Thyroid gland (tissue), 4 donors: ENCODE measurements at regions of chr16 and their contacts with region 1.

Region 1: DNA sequence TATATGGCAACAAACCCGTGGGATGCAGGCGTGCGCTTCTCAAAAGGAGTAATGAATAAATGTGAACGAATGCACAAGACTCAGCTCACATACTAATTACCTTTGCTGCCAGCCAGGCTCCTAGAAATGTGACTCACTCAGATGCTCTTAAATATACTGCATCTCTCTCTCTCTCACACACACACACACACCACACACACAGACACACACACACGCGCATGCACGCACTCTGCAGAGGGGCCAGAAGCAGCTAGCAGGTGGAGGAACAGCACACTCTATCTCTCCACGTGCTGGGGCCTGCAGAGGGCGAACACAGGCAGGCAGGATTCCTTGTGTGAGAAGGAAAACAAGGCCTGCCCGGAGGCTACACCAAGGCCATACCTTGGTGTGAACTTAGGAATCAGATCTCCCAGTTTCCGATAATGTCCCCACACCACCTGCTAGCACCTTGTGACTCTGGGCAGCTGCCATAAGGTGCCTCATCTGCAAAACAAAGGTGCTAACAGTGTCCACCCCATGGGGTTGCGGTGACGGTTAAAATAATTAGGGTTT is 5.3 kb downstream of the GPRC5B start:
- DNase-seq: no peak
- H3K4me3 ChIP-seq: no peak overlapping the region
- H3K27ac ChIP-seq: no peak overlapping the region
- H3K4me1 ChIP-seq: peaks cover 0 to 5% of the 10 kb centered on the region in 2 donors
- H3K27me3 ChIP-seq: no peaks in the 10 kb centered on the region
- CTCF ChIP-seq: no peak
- POLR2A ChIP-seq: no peak

Region 2: DNA sequence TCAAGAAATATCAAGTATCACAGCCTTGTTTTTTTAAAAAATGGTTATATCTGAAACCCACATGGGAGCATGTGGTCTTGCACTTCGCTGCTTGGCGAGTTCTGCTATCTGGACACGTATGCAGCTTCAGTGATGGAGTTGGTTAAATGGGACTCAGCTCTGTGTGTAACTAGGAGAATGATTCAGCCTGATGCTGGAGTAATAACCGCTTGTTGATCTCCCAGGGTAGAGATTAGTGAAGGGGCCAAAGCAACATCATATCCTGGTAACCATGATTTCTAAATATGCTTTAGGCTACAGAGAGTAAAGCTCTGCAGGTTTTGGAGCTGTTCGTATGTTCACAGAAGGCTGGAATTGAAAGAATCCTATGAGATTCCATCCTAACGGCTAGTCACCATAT is 98.1 kb before region 1 on chr16:
- intact Hi-C with region 1: no loop called
- DNase-seq: no peak
- H3K4me3 ChIP-seq: no peak overlapping the region
- H3K27ac ChIP-seq: no peak overlapping the region
- H3K4me1 ChIP-seq: peaks cover under 1 to 24% of the 10 kb centered on the region in 2 donors
- H3K27me3 ChIP-seq: no peaks in the 10 kb centered on the region
- CTCF ChIP-seq: no peak
- POLR2A ChIP-seq: no peak

Region 3: GRCh38 chr16:19810817-19811731 is 68.2 kb before region 1 on chr16:
- intact Hi-C with region 1: loop called (anchors 10 kb)
- DNase-seq: peak; percentile 79 to 87
- H3K4me3 ChIP-seq: no peak overlapping the region
- H3K27ac ChIP-seq: peak overlapping the region; percentile 17 to 79 (median 70)
- H3K4me1 ChIP-seq: peaks cover 37 to 42% of the 10 kb centered on the region in 2 donors
- H3K27me3 ChIP-seq: no peaks in the 10 kb centered on the region
- CTCF ChIP-seq: no peak
- POLR2A ChIP-seq: no peak